Calu3 (cell line): ENCODE measurements at regions of chr10 and their contacts with region 1.

Region 1: GRCh38 chr10:117865945-117866344 is 180.8 kb downstream of the RAB11FIP2 start:
- DNase-seq: no peak
- H3K4me3 Mint-ChIP-seq: no peak overlapping the region
- H3K27ac Mint-ChIP-seq: no peak overlapping the region
- H3K4me1 Mint-ChIP-seq: no peaks in the 10 kb centered on the region
- H3K27me3 Mint-ChIP-seq: no peaks in the 10 kb centered on the region
- CTCF ChIP-seq: no peak

Region 2: GRCh38 chr10:117885206-117885829 is 19.4 kb after region 1 on chr10:
- CTCF ChIA-PET with region 1: no interaction called
- intact Hi-C with region 1: loop called (anchors 1 kb)
- DNase-seq: no peak
- H3K4me3 Mint-ChIP-seq: no peak overlapping the region
- H3K27ac Mint-ChIP-seq: no peak overlapping the region
- H3K4me1 Mint-ChIP-seq: no peaks in the 10 kb centered on the region
- H3K27me3 Mint-ChIP-seq: peaks cover 13% of the 10 kb centered on the region
- CTCF ChIP-seq: no peak

Region 3: GRCh38 chr10:117968354-117969182 is 102.6 kb after region 1 on chr10:
- CTCF ChIA-PET with region 1: no interaction called
- intact Hi-C with region 1: no loop called
- DNase-seq: no peak
- H3K4me3 Mint-ChIP-seq: no peak overlapping the region
- H3K27ac Mint-ChIP-seq: no peak overlapping the region
- H3K4me1 Mint-ChIP-seq: no peaks in the 10 kb centered on the region
- H3K27me3 Mint-ChIP-seq: no peaks in the 10 kb centered on the region
- CTCF ChIP-seq: no peak